Naive thymus-derived CD4-positive, alpha-beta T cell (primary cell): ENCODE measurements at regions of chr18 and their contacts with region 1.

Region 1: DNA sequence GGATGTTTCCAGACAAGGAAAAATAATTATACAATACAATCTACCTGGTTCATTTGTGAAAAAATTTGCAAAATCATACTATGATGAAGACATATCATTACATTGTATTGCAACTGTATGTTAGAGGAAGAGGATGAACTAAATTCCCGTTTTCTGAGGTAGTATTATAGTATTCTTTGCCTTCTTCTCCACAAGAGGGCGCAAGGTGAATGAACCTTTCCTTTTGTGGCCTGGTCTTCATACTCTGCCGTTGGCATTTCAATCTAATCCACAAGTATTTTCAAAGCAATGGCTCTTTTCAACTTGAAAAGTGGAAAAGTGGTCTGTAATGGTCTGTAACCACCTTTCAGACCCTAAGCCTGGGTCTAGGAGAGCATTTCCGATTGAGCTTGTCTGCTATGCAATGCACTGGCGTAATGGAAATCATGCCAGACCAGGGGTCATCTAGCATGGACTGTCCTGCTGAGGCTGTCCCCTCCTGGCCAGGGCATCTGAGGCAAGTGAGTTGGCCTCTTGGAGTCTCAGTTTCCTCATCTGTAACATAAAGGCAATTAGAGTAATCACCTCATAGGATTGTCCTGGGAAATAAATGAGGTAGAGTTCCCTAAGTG is 30.8 kb upstream of the ZNF396 start:
- DNase-seq: peak in 7 of 9 donors; percentile 14 to 70 (median 60)
- ATAC-seq: peak; percentile 90
- H3K4me3 ChIP-seq: no peak overlapping the region
- H3K4me3 Mint-ChIP-seq: no peak overlapping the region
- H3K27ac ChIP-seq: no peak overlapping the region
- H3K27ac Mint-ChIP-seq: no peak overlapping the region
- H3K4me1 ChIP-seq: peaks cover 0 to 4% of the 10 kb centered on the region in 2 donors
- H3K4me1 Mint-ChIP-seq: peaks cover 10 to 35% (median 17%) of the 10 kb centered on the region in 7 donors
- H3K27me3 ChIP-seq: no peaks in the 10 kb centered on the region
- H3K27me3 Mint-ChIP-seq: peaks cover 0 to 15% (median 7%) of the 10 kb centered on the region in 5 donors

Region 2: GRCh38 chr18:35513181-35513936 is 105.4 kb after region 1 on chr18:
- CTCF ChIA-PET with region 1: no interaction called
- POLR2A ChIA-PET with region 1: no interaction called
- intact Hi-C with region 1: loop called in 1 of 2 experiments (anchors 5 kb)
- DNase-seq: no peak
- ATAC-seq: no peak
- H3K4me3 ChIP-seq: no peak overlapping the region
- H3K4me3 Mint-ChIP-seq: no peak overlapping the region
- H3K27ac ChIP-seq: no peak overlapping the region
- H3K27ac Mint-ChIP-seq: no peak overlapping the region
- H3K4me1 ChIP-seq: no peaks in the 10 kb centered on the region
- H3K4me1 Mint-ChIP-seq: no peaks in the 10 kb centered on the region
- H3K27me3 ChIP-seq: no peaks in the 10 kb centered on the region
- H3K27me3 Mint-ChIP-seq: no peaks in the 10 kb centered on the region

Region 3: GRCh38 chr18:35580701-35581539 is 172.9 kb after region 1 on chr18:
- CTCF ChIA-PET with region 1: no interaction called
- POLR2A ChIA-PET with region 1: no interaction called
- intact Hi-C with region 1: loop called (anchors 5 kb)
- DNase-seq: peak; percentile 54 to 70 (median 63)
- ATAC-seq: peak; percentile 84
- H3K4me3 ChIP-seq: peak overlapping the region; percentile 61
- H3K4me3 Mint-ChIP-seq: peak overlapping the region; percentile 60 to 80 (median 72)
- H3K27ac ChIP-seq: peak overlapping the region; percentile 77
- H3K27ac Mint-ChIP-seq: peak overlapping the region in 5 of 9 donors; percentile 37 to 80 (median 63)
- H3K4me1 ChIP-seq: peaks cover 11% of the 10 kb centered on the region in 2 donors
- H3K4me1 Mint-ChIP-seq: peaks cover 13 to 39% (median 28%) of the 10 kb centered on the region in 7 donors
- H3K27me3 ChIP-seq: no peaks in the 10 kb centered on the region
- H3K27me3 Mint-ChIP-seq: peaks cover 0 to 18% (median 7%) of the 10 kb centered on the region in 5 donors

Region 4: GRCh38 chr18:35949903-35950627 is 542.1 kb after region 1 on chr18:
- CTCF ChIA-PET with region 1: interaction called, 3 read pairs
- POLR2A ChIA-PET with region 1: no interaction called
- intact Hi-C with region 1: loop called (anchors 1 kb)
- DNase-seq: peak; percentile 36 to 68 (median 57)
- ATAC-seq: peak; percentile 89
- H3K4me3 ChIP-seq: peak overlapping the region; percentile 70
- H3K4me3 Mint-ChIP-seq: peak overlapping the region; percentile 78 to 93 (median 88)
- H3K27ac ChIP-seq: no peak overlapping the region
- H3K27ac Mint-ChIP-seq: peak overlapping the region in 4 of 9 donors; percentile 21 to 59 (median 28)
- H3K4me1 ChIP-seq: peaks cover 4 to 8% of the 10 kb centered on the region in 2 donors
- H3K4me1 Mint-ChIP-seq: peaks cover 0 to 9% (median 4%) of the 10 kb centered on the region in 7 donors
- H3K27me3 ChIP-seq: peaks cover 0 to 4% of the 10 kb centered on the region in 2 donors
- H3K27me3 Mint-ChIP-seq: peaks cover 14 to 33% (median 24%) of the 10 kb centered on the region in 5 donors

Region 5: DNA sequence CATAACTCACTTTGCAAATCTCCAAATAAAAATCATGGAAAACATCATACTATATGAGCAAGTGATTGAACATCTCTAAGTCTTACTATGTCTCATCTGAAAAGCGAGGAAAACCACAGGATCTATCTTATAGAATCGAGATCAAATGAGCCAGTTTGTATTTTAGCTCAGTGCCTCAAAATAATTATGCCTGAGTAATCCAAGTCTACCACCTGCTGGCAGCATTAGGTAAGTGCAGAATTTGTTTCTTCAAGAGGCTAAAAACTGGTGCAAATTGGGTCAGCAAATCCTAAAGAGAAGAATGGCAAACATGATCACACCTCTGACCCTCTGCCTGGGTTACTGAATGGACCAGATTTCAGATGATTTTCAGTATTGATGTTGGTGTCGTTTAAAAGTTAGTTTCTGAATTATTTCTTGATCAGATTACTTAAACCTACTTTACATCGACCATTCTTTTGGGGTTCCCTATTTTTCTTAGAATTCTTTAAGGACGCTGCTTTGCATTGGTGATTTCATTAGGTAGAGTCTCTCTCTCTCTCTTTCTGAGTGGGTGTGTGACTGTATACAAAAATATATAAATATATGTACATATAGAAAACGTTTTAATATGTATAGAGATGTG is 876.8 kb after region 1 on chr18:
- CTCF ChIA-PET with region 1: no interaction called
- POLR2A ChIA-PET with region 1: interaction called, 3 read pairs
- intact Hi-C with region 1: loop called in 1 of 2 experiments (anchors 10 kb)
- DNase-seq: peak in 7 of 9 donors; percentile 20 to 61 (median 54)
- ATAC-seq: peak; percentile 67
- H3K4me3 ChIP-seq: no peak overlapping the region
- H3K4me3 Mint-ChIP-seq: no peak overlapping the region
- H3K27ac ChIP-seq: no peak overlapping the region
- H3K27ac Mint-ChIP-seq: no peak overlapping the region
- H3K4me1 ChIP-seq: no peaks in the 10 kb centered on the region
- H3K4me1 Mint-ChIP-seq: peaks cover 0 to 4% (median 0%) of the 10 kb centered on the region in 7 donors
- H3K27me3 ChIP-seq: no peaks in the 10 kb centered on the region
- H3K27me3 Mint-ChIP-seq: peaks cover 30 to 59% (median 33%) of the 10 kb centered on the region in 5 donors